ENCODE measurements at regions of chr22 and their contacts with region 1.

Region 1: DNA sequence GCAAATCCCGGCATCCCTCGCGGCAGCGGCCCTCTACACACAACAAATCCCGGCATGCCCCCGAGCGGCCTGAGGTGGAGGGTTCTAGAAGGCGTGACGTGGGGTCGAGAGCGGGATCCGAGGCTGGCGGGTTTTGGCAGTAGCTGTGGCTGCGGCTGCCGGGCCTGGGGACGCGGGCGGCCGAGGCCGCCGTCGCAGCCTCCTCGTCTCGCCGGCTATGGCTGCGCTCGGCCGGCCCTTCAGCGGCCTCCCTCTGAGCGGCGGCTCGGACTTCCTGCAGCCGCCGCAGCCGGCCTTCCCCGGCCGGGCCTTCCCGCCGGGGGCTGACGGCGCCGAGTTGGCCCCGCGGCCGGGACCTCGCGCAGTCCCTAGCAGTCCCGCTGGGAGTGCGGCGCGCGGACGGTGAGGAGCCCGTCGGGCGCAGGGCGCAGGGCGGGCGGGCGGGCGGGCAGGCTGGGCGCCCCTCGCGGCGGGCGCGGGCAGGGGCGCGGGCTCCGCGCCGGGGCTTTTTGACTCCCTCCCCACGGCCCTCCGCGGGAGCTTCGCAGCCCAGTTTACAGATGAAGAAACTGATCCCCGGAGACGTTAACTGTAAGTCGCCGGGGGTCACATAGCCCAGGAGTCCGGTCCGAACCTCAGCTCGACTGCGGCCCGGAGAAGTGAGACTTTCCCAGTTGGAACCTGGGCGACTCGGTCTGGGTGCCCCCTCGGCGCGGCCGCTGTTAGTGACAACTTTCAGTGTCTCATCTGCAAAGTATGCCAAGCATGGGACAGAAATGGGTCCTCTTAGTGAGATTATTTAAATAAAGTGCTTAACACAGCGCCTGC is at the start of gene CCDC117:
- DNase-seq: peak; percentile 97
- H3K4me3 ChIP-seq: peak within 1 kb of the TSS; percentile 80
- H3K27ac ChIP-seq: peak within 1 kb of the TSS; percentile 98
- H3K4me1 ChIP-seq: peaks cover 43% of the 10 kb centered on the region
- H3K27me3 ChIP-seq: no peaks in the 10 kb centered on the region
- CTCF ChIP-seq: peak; percentile 38
- total RNA-seq, gene CCDC117: 10.1 TPM

Region 2: GRCh38 chr22:29517215-29517908 is 744.5 kb after region 1 on chr22:
- intact Hi-C with region 1: loop called (anchors 10 kb)
- DNase-seq: peak; percentile 26
- H3K4me3 ChIP-seq: no peak overlapping the region
- H3K27ac ChIP-seq: peak overlapping the region; percentile 79
- H3K4me1 ChIP-seq: peaks cover 20% of the 10 kb centered on the region
- H3K27me3 ChIP-seq: no peaks in the 10 kb centered on the region
- CTCF ChIP-seq: no peak

Measured in left ventricle myocardium inferior (tissue), 1 donor.